ENCODE measurements at regions of chr5 and their contacts with region 1.

Region 1: GRCh38 chr5:142699184-142699720 is 13.4 kb upstream of the FGF1 start:
- H3K4me3 ChIP-seq: no peak overlapping the region
- H3K27ac ChIP-seq: no peak overlapping the region
- H3K4me1 ChIP-seq: peaks cover 16% of the 10 kb centered on the region
- CTCF ChIP-seq: peak; percentile 92

Region 2: GRCh38 chr5:142145106-142145900 is 553.9 kb before region 1 on chr5:
- CTCF ChIA-PET with region 1: interaction called, 10 read pairs
- POLR2A ChIA-PET with region 1: no interaction called
- H3K4me3 ChIP-seq: no peak overlapping the region
- H3K27ac ChIP-seq: no peak overlapping the region
- H3K4me1 ChIP-seq: no peaks in the 10 kb centered on the region
- CTCF ChIP-seq: no peak

Region 3: GRCh38 chr5:142548739-142549275 is 150.4 kb before region 1 on chr5:
- CTCF ChIA-PET with region 1: interaction called, 16 read pairs
- POLR2A ChIA-PET with region 1: no interaction called
- H3K4me3 ChIP-seq: no peak overlapping the region
- H3K27ac ChIP-seq: no peak overlapping the region
- H3K4me1 ChIP-seq: peaks cover 2% of the 10 kb centered on the region; the same call in 1 of the 2 replicates
- CTCF ChIP-seq: peak; percentile 95

Region 4: DNA sequence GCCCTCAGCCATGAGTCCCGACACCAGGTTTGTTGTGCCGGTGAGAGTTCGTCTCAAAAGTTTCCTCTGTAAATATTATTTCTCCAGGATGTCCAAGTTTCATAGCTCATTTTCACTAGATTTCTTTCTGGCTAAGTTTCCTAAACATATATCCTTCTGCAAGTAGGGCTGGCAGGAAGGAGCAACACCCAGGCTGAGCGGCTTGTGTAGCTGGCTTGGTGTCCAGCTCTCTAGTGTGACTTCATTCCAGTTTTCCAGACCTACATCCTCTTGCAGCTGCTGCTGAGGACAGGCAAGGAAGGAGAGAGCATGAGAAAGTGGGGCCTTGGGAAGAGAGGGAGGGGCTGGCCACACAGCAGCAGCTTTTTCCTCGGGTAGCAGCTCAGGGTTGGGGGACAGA is 93.6 kb before region 1 on chr5:
- CTCF ChIA-PET with region 1: interaction called, 93 read pairs
- POLR2A ChIA-PET with region 1: interaction called, 3 read pairs
- H3K4me3 ChIP-seq: no peak overlapping the region
- H3K27ac ChIP-seq: no peak overlapping the region
- H3K4me1 ChIP-seq: peaks cover 7% of the 10 kb centered on the region
- CTCF ChIP-seq: no peak

Region 5: DNA sequence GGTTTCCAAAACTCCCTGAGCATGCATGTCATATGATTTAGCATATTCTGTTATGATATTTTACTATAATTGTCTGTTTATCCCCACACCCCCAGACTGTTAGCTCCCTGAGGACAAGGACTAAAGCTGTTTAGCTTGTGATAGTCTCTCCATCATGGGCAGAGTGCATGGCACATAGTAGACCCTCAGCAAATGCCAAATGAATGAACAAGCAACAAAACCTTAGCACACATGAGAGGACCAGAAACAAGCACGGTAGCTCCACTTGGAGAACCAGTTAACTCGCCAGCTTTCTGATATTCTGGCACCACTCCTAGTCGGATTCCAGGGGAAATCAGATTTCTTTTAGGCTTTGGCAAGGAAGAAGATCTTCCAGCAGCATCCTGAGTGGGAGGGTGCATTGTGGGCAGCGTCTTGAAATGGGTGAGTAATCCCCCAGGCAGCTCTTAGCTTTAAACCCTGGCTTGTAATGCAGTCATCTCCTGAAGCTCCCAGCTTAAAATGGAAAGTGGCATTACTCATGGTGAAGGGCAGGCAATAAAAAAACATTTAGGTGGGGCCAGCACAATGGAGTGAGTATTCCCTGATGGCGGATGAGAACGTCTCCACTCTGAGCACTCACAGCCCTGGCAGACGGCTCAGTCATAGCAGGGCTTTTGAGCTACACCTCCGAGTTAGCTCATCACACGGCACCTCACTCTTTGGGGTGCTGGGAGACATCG is 54.5 kb before region 1 on chr5:
- CTCF ChIA-PET with region 1: interaction called, 20 read pairs
- POLR2A ChIA-PET with region 1: interaction called, 4 read pairs
- H3K4me3 ChIP-seq: peak overlapping the region; percentile 21
- H3K27ac ChIP-seq: no peak overlapping the region
- H3K4me1 ChIP-seq: peaks cover 5% of the 10 kb centered on the region; the same call in 1 of the 2 replicates
- CTCF ChIP-seq: no peak

Region 6: GRCh38 chr5:142663246-142663645 is 36.0 kb before region 1 on chr5:
- CTCF ChIA-PET with region 1: interaction called, 232 read pairs
- POLR2A ChIA-PET with region 1: no interaction called
- H3K4me3 ChIP-seq: no peak overlapping the region
- H3K27ac ChIP-seq: no peak overlapping the region
- H3K4me1 ChIP-seq: no peaks in the 10 kb centered on the region
- CTCF ChIP-seq: no peak

Region 7: GRCh38 chr5:142685418-142686209 is 13.6 kb before region 1 on chr5 and contains the start of gene FGF1:
- CTCF ChIA-PET with region 1: interaction called, 25 read pairs
- POLR2A ChIA-PET with region 1: no interaction called
- H3K4me3 ChIP-seq: no peak within 1 kb of the TSS
- H3K27ac ChIP-seq: no peak within 1 kb of the TSS
- H3K4me1 ChIP-seq: no peaks in the 10 kb centered on the region; the same call in 1 of the 2 replicates
- CTCF ChIP-seq: no peak

Region 8: GRCh38 chr5:143413958-143414669 is 714.9 kb after region 1 on chr5:
- CTCF ChIA-PET with region 1: no interaction called
- POLR2A ChIA-PET with region 1: no interaction called
- H3K4me3 ChIP-seq: no peak overlapping the region
- H3K27ac ChIP-seq: no peak overlapping the region
- H3K4me1 ChIP-seq: peaks cover 15% of the 10 kb centered on the region; the same call in 1 of the 2 replicates
- CTCF ChIP-seq: no peak